Activated CD4-positive, alpha-beta memory T cell treated with anti-CD3 and anti-CD28 coated beads, Interleukin-2, amount 10 ng/mL, durations not matched to agents 7 days and 5 days (primary cell): ENCODE measurements at regions of chr5 and their contacts with region 1.

Region 1: GRCh38 chr5:180802325-180803180 is at the start of gene MGAT1:
- DNase-seq: peak; percentile 79
- H3K4me3 Mint-ChIP-seq: peak within 1 kb of the TSS; percentile 92
- H3K27ac Mint-ChIP-seq: peak within 1 kb of the TSS; percentile 97
- H3K4me1 Mint-ChIP-seq: peaks cover 82% of the 10 kb centered on the region
- H3K27me3 Mint-ChIP-seq: no peaks in the 10 kb centered on the region
- total RNA-seq, gene MGAT1: 184 to 185 TPM

Region 2: DNA sequence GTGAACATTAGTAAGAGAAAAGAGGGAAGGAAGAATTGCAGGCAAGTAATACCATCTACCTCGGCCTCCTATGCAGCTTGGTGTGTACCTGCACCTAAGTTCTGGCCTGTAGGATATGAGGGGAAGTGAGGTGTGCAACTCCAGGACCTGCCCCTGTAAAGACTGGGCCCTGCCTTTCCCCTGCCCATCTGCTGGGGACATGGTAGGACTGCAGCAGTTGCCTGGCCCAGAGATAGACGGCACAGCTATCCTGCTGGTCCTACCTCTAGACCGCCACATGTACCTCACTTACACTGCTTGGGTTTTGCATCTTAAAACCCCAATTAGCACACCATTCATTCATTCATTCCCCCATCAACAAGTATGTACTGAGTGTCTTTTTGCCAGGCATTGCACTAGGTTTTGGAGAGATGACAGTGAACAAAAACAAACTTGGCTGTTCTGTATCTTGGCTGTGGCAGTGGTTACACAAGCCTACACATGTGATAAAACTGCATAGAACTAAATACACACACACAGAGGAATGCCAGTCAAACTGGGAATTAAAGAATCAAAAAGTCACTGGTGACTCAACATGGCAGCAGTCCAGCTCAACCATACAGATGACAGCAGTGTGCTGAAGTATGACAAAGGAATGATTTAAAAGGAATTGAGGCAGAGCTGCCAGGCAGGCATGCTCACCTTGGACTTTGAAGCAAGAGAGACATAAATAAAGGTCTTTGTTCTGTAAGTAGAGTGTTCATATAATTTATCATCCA is 23.4 kb after region 1 on chr5:
- CTCF ChIA-PET with region 1: interaction called, 31 read pairs
- POLR2A ChIA-PET with region 1: interaction called, 404 read pairs
- DNase-seq: no peak
- H3K4me3 Mint-ChIP-seq: no peak overlapping the region
- H3K27ac Mint-ChIP-seq: no peak overlapping the region
- H3K4me1 Mint-ChIP-seq: peaks cover 31% of the 10 kb centered on the region
- H3K27me3 Mint-ChIP-seq: no peaks in the 10 kb centered on the region

Region 3: GRCh38 chr5:180860887-180861822 is 58.6 kb after region 1 on chr5 and contains the start of gene ZFP62:
- CTCF ChIA-PET with region 1: interaction called, 6 read pairs
- POLR2A ChIA-PET with region 1: interaction called, 30 read pairs
- DNase-seq: peak; percentile 88
- H3K4me3 Mint-ChIP-seq: peak within 1 kb of the TSS; percentile 95
- H3K27ac Mint-ChIP-seq: peak within 1 kb of the TSS; percentile 95
- H3K4me1 Mint-ChIP-seq: peaks cover 16% of the 10 kb centered on the region
- H3K27me3 Mint-ChIP-seq: peaks cover 5% of the 10 kb centered on the region
- total RNA-seq, gene ZFP62: 19.4 to 20.0 TPM